ENCODE measurements at regions of chr2 and their contacts with region 1.

Region 1: DNA sequence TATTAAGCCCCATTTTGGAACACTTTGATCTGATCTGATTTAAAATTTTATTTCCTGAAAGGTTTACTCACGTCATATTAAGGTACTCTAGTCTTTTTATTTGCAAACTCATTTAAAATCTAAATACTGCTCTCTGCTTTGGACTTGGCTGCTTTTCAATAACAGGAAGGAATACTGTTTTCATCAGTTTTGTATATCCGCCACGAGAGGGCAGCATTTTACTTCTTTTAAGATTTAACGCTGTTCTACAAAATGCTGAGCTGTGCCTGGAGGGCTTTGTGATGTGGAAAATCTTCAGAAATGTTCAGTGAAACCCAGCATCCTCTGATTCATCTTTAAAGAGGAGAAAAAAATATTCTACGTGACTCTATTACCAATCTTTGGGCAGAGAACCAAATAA is 37.5 kb upstream of the SLC38A11 start:
- DNase-seq: peak; percentile 74
- ATAC-seq: peak; percentile 54
- H3K4me3 Mint-ChIP-seq: no peak overlapping the region
- H3K27ac Mint-ChIP-seq: no peak overlapping the region
- H3K4me1 Mint-ChIP-seq: peaks cover 46% of the 10 kb centered on the region
- H3K27me3 Mint-ChIP-seq: no peaks in the 10 kb centered on the region

Region 2: GRCh38 chr2:164134336-164134735 is 858.5 kb before region 1 on chr2:
- CTCF ChIA-PET with region 1: no interaction called
- POLR2A ChIA-PET with region 1: no interaction called
- DNase-seq: no peak
- ATAC-seq: no peak
- H3K4me3 Mint-ChIP-seq: no peak overlapping the region
- H3K27ac Mint-ChIP-seq: no peak overlapping the region
- H3K4me1 Mint-ChIP-seq: no peaks in the 10 kb centered on the region
- H3K27me3 Mint-ChIP-seq: no peaks in the 10 kb centered on the region

Region 3: GRCh38 chr2:165016772-165017411 is 24.1 kb after region 1 on chr2:
- CTCF ChIA-PET with region 1: interaction called, 14 read pairs
- POLR2A ChIA-PET with region 1: no interaction called
- DNase-seq: peak; percentile 37
- ATAC-seq: peak; percentile 71
- H3K4me3 Mint-ChIP-seq: no peak overlapping the region
- H3K27ac Mint-ChIP-seq: no peak overlapping the region
- H3K4me1 Mint-ChIP-seq: no peaks in the 10 kb centered on the region
- H3K27me3 Mint-ChIP-seq: no peaks in the 10 kb centered on the region

Region 4: DNA sequence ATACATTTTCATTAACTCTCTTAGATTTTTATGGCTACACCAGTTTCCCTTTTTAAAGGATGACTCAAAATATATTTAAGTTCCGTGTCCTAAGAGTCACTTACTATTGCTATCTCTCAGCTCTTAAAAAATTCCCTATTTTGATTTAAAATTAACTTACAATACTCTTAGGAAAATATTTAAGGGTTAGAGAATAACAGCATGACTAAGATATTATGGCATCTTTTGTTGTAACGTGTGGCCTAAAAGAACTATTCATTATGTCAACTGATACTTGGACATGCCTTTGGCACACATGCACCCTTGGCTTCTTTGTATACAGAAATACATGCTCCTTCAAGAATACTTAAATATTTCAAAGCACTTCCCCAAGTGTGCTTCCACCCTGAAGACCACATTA is 168.7 kb after region 1 on chr2:
- CTCF ChIA-PET with region 1: no interaction called
- POLR2A ChIA-PET with region 1: no interaction called
- DNase-seq: no peak
- ATAC-seq: no peak
- H3K4me3 Mint-ChIP-seq: no peak overlapping the region
- H3K27ac Mint-ChIP-seq: no peak overlapping the region
- H3K4me1 Mint-ChIP-seq: no peaks in the 10 kb centered on the region
- H3K27me3 Mint-ChIP-seq: no peaks in the 10 kb centered on the region

Region 5: DNA sequence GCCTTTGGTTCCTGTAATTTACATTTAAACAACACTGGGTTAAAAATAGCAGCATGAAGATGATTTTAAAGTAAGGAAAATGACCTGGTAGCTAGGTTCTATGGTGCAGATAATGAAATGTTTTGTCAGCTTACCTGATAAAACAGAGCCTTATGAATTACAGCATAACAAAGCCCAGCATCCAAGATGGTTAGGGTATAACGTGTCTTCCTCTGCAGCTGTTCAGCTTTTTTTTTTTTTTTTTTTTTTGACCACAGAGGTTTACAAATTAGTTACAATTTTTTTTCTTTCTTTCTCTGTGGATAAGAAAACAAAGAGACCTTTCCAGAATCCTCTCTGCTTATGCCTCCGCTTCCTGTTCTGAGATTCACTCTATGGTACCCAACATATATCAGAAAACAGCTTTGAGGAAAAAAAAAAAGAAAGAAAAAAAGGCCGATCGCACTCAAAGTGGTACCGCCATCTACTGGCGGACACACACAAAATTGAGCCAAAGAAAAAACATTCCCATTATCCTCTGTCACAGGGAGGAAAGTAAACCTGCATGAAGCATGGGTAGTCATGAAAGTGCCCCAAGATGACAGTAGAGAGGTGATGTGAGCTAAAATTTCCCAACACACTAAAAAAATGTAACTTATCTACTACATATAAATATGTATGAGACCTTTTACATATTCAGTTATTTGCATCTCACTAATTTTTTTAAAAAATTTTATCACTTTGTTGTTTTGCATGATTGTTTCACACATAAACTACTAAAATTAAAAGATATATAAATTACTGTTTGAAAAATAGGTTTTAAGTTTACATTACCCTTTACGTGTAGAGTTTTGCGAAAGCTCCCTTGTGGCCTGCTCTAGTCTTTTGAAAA is 211.1 kb after region 1 on chr2 and contains the start of gene SCN3A:
- CTCF ChIA-PET with region 1: interaction called, 22 read pairs
- POLR2A ChIA-PET with region 1: no interaction called
- DNase-seq: peak; percentile 28
- ATAC-seq: no peak
- H3K4me3 Mint-ChIP-seq: no peak within 1 kb of the TSS
- H3K27ac Mint-ChIP-seq: no peak within 1 kb of the TSS
- H3K4me1 Mint-ChIP-seq: peaks cover 4% of the 10 kb centered on the region
- H3K27me3 Mint-ChIP-seq: no peaks in the 10 kb centered on the region
- total RNA-seq, gene SCN3A: not detected